ENCODE measurements at regions of chr7 and their contacts with region 1.

Region 1: GRCh38 chr7:48088559-48089045 is 463 bp upstream of the UPP1 start:
- DNase-seq: peak; percentile 93 to 94
- H3K4me3 ChIP-seq: peak overlapping the region in 2 of 3 donors; percentile 39 to 62
- H3K27ac ChIP-seq: peak overlapping the region; percentile 91 to 98 (median 94)
- H3K4me1 ChIP-seq: peaks cover 8 to 49% of the 10 kb centered on the region in 2 donors
- H3K27me3 ChIP-seq: no peaks in the 10 kb centered on the region
- CTCF ChIP-seq: no peak
- POLR2A ChIP-seq: no peak

Region 2: GRCh38 chr7:47807756-47808155 is 280.8 kb before region 1 on chr7:
- intact Hi-C with region 1: no loop called
- DNase-seq: no peak
- H3K4me3 ChIP-seq: no peak overlapping the region
- H3K27ac ChIP-seq: no peak overlapping the region
- H3K4me1 ChIP-seq: no peaks in the 10 kb centered on the region
- H3K27me3 ChIP-seq: no peaks in the 10 kb centered on the region
- CTCF ChIP-seq: no peak
- POLR2A ChIP-seq: no peak

Region 3: GRCh38 chr7:47979145-47979831 is 109.3 kb before region 1 on chr7 and contains the start of gene HUS1:
- intact Hi-C with region 1: loop called (anchors 5 kb)
- DNase-seq: peak; percentile 91 to 92
- H3K4me3 ChIP-seq: peak within 1 kb of the TSS; percentile 7 to 52 (median 45)
- H3K27ac ChIP-seq: peak within 1 kb of the TSS; percentile 60 to 89 (median 80)
- H3K4me1 ChIP-seq: peaks cover 4 to 8% of the 10 kb centered on the region in 2 donors
- H3K27me3 ChIP-seq: no peaks in the 10 kb centered on the region
- CTCF ChIP-seq: no peak
- POLR2A ChIP-seq: peak in 1 of 2 donors; percentile 77
- total RNA-seq, gene HUS1: 32.1 to 83.8 (median 39.8) TPM

Region 4: DNA sequence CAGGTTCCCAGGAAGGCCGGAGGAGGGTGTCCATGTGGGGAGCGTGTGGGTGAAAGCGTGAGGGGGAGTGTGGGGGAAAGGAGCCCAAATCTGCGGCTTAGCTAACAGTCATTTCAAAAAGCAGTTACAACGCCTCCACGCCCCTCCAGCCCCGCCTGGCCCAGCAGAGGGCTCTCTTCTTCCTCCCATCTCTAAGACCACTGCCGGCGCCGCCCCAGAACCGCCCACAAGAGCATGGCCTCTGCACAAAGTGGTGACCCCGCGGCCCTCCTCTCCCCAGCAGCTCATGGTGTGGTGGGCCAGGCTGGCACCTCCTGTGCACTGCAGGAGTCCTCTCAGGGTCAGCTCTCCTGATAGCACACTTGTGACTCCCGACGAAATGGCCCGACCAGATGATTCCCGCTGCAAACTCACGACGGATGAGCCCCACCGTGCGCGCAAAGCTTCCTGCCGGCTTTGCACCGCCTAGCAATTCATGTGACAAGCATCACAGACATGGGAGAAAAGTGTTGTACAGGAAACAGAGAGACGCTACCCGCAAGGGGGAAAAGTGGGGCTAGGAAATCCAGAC is 96.8 kb before region 1 on chr7:
- intact Hi-C with region 1: no loop called
- DNase-seq: peak; percentile 80
- H3K4me3 ChIP-seq: peak overlapping the region in 1 of 3 donors; percentile 37
- H3K27ac ChIP-seq: no peak overlapping the region
- H3K4me1 ChIP-seq: no peaks in the 10 kb centered on the region
- H3K27me3 ChIP-seq: no peaks in the 10 kb centered on the region
- CTCF ChIP-seq: peak; percentile 13 to 59 (median 40)
- POLR2A ChIP-seq: no peak

Region 5: DNA sequence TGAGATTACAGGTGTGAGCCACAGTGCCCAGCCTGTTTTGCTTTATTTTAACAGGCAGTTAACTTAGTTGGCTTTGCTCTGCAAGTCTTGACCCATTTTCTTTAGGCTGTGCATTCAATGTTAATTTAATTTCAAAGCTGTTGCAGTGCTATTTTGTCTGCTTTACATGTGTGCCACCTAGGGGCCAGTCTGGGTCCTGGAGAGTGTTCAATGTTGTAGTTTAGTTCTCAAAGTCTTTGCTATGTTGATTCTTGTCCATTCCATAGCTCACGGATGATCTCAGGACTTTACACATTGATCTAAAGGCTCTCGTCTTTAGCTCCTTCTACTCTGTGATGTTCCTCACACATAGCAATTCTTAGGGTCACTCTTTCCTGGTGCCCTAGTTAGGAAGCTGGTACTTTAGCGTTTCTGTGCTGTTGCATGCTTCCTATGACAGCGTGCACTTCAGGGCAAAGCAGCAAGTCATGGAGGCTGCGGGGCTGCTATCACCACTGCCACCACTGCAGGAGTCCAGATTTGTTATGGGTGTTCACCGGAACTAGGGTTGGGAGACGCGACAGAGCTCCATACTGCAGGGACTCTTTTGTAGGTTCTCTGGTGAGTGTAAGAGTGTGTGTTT is 66.3 kb after region 1 on chr7:
- intact Hi-C with region 1: no loop called
- DNase-seq: peak in 1 of 2 donors; percentile 10
- H3K4me3 ChIP-seq: no peak overlapping the region
- H3K27ac ChIP-seq: no peak overlapping the region
- H3K4me1 ChIP-seq: peaks cover 0 to 5% of the 10 kb centered on the region in 2 donors
- H3K27me3 ChIP-seq: no peaks in the 10 kb centered on the region
- CTCF ChIP-seq: peak in 3 of 6 experiments; percentile 17 to 34 (median 24)
- POLR2A ChIP-seq: no peak

Region 6: DNA sequence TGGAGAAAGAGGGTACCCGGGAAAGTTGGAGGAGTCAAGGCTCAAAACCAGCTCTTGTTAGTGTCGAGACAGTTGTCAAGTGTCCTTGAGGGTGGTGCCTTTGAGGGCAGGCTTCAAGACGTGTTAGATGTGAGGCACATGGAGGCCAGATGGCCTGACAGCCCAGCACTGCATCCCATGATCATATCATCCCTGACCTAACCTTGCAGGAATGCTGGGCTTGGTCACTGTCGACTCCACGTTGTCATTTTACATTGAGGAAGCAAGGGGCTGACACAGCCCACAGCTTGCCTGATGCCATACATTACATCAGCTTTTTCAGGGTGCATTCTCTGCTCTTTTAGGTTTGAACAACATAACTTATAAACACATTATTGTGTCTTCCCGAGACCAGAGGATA is 196.8 kb after region 1 on chr7:
- intact Hi-C with region 1: no loop called
- DNase-seq: no peak
- H3K4me3 ChIP-seq: no peak overlapping the region
- H3K27ac ChIP-seq: no peak overlapping the region
- H3K4me1 ChIP-seq: no peaks in the 10 kb centered on the region
- H3K27me3 ChIP-seq: no peaks in the 10 kb centered on the region
- CTCF ChIP-seq: no peak
- POLR2A ChIP-seq: no peak